ENCODE measurements at regions of chr15 and their contacts with region 1.

Region 1: GRCh38 chr15:63188926-63189871 is at the start of gene RAB8B:
- DNase-seq: peak; percentile 98
- H3K4me3 Mint-ChIP-seq: peak within 1 kb of the TSS; percentile 99
- H3K27ac Mint-ChIP-seq: peak within 1 kb of the TSS; percentile 99
- H3K4me1 Mint-ChIP-seq: peaks cover 42% of the 10 kb centered on the region
- H3K27me3 Mint-ChIP-seq: no peaks in the 10 kb centered on the region
- total RNA-seq, gene RAB8B: 91.5 to 93.1 TPM

Region 2: DNA sequence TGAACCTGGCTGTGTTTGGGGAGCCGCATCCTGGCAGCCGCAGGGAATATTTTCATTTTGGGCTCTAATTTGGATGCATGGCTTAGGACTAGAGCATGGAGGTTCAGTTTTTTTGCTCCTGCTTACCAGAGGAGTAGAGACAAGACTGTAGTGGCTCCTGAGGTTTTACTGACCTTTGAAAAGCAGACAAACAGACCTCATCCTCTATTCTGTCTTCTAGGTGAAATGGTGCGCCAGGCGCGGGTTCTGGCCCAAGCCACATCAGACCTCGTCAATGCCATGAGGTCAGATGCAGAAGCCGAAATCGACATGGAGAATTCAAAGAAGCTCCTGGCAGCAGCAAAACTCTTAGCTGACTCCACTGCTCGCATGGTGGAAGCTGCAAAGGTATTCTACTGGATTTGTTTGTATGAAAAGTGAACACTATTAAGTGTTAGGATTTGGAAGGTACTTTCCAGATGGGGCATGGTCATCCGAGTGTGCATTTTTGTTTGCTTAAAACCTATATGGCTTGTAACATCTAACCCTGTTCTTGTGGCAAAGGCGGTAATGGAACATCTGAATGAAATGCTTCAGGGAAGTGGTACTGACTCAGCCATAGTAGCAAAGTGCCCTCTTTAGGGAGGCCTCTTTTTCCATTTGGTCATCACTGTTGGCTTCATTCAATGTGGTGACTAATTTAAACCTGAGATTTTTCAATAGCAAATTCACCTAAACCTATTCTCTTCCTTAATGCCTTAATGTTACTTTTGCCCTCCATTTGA is 477.3 kb before region 1 on chr15:
- CTCF ChIA-PET with region 1: no interaction called
- intact Hi-C with region 1: loop called (anchors 5 kb)
- DNase-seq: peak; percentile 57
- H3K4me3 Mint-ChIP-seq: no peak overlapping the region
- H3K27ac Mint-ChIP-seq: peak overlapping the region; percentile 59
- H3K4me1 Mint-ChIP-seq: peaks cover 14% of the 10 kb centered on the region
- H3K27me3 Mint-ChIP-seq: no peaks in the 10 kb centered on the region

Region 3: DNA sequence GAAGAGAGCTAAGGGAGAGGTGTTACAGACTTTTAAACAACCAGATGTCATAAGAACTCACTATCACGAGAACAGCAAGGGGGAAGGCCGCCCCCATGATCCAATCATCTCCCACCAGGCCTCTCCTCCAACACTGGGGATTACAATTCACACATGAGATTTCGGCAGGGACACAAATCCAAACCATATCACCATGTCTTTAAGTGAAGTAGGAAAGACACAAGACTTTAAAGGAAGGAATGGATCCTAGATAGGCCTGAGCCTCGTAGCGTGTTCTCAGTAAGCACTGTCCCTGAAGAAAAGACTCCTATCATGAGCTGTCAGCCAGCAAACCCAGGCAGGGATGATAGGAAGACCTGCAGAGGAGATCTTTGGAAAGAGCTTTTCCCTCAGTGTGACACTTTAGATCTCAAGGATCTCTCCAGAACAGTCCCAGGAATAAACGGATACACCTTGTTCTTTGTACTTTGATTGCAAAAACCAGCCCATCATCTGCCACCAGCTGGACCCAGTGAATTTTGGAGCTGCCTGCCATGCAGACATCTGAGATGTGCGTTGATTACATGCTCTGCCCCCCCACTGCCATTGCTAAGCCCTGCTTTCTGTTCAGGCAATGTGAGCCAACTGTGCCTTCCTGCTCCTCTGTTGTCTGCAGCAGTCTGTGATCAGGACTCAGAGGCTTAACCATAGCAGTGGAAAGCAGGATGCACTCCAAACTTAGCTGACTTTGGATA is 16.7 kb before region 1 on chr15:
- CTCF ChIA-PET with region 1: interaction called, 5 read pairs
- intact Hi-C with region 1: loop called (anchors 1 kb)
- DNase-seq: no peak
- H3K4me3 Mint-ChIP-seq: no peak overlapping the region
- H3K27ac Mint-ChIP-seq: no peak overlapping the region
- H3K4me1 Mint-ChIP-seq: peaks cover 14% of the 10 kb centered on the region
- H3K27me3 Mint-ChIP-seq: no peaks in the 10 kb centered on the region

Region 4: DNA sequence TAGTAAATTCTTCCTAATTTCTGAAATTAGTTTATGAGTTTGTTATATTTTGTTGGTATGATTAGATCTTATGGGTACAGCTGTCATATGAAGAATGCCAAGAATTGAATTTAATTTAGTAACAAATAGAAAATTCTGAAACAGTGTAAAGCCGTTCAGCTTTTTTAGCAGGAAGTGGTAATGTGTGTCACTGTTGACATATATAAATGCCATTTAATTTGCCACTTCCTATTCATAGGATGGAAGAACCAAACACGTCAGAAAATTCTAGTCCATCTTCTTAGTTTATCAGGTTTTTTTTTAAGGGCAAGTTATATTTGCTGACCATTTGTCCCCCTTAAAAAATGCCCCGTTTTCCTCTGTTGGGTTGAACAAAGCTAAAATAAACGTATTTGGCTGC is 43.2 kb after region 1 on chr15:
- CTCF ChIA-PET with region 1: interaction called, 6 read pairs
- intact Hi-C with region 1: loop called (anchors 1 kb)
- DNase-seq: no peak
- H3K4me3 Mint-ChIP-seq: no peak overlapping the region
- H3K27ac Mint-ChIP-seq: peak overlapping the region; percentile 52
- H3K4me1 Mint-ChIP-seq: peaks cover 81% of the 10 kb centered on the region
- H3K27me3 Mint-ChIP-seq: no peaks in the 10 kb centered on the region

Region 5: GRCh38 chr15:63497642-63498467 is 308.7 kb after region 1 on chr15:
- CTCF ChIA-PET with region 1: no interaction called
- intact Hi-C with region 1: loop called (anchors 2 kb)
- DNase-seq: peak; percentile 81
- H3K4me3 Mint-ChIP-seq: no peak overlapping the region
- H3K27ac Mint-ChIP-seq: no peak overlapping the region
- H3K4me1 Mint-ChIP-seq: peaks cover 82% of the 10 kb centered on the region
- H3K27me3 Mint-ChIP-seq: no peaks in the 10 kb centered on the region

Region 6: DNA sequence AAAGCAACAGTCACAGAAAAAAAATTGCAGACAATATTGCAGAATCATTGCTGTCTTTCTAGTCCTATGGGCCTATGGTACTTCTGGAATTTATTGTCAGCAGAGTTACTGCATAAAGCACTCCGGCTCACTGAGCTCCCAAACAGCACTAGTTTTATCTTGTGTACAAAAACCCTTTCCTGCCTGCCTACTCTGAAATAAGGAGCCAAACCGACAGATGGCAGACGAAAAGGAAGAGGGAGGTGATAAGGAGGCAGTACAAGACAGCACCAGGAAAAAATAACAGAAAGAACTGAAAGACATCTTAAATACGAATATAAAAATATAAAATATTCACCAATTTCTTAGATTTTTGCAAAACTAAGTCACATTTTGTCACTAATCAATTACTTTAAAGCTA is 629.0 kb after region 1 on chr15:
- CTCF ChIA-PET with region 1: no interaction called
- intact Hi-C with region 1: no loop called
- DNase-seq: peak; percentile 22
- H3K4me3 Mint-ChIP-seq: no peak overlapping the region
- H3K27ac Mint-ChIP-seq: no peak overlapping the region
- H3K4me1 Mint-ChIP-seq: peaks cover 69% of the 10 kb centered on the region
- H3K27me3 Mint-ChIP-seq: no peaks in the 10 kb centered on the region

Measured in activated naive CD4-positive, alpha-beta T cell treated with anti-CD3 and anti-CD28 coated beads for 36 hours (primary cell).